Heart left ventricle (tissue), 16 donors: ENCODE measurements at regions of chr1 and their contacts with region 1.

Region 1: GRCh38 chr1:100613817-100614559 is 76.0 kb downstream of the GPR88 start:
- DNase-seq: no peak
- ATAC-seq: no peak
- H3K4me3 ChIP-seq: no peak overlapping the region
- H3K27ac ChIP-seq: no peak overlapping the region
- H3K4me1 ChIP-seq: no peaks in the 10 kb centered on the region
- H3K27me3 ChIP-seq: no peaks in the 10 kb centered on the region
- CTCF ChIP-seq: no peak
- POLR2A ChIP-seq: no peak

Region 2: GRCh38 chr1:100474834-100475233 is 139.2 kb before region 1 on chr1:
- intact Hi-C with region 1: loop called in 1 of 10 experiments (anchors 10 kb)
- DNase-seq: no peak
- ATAC-seq: no peak
- H3K4me3 ChIP-seq: no peak overlapping the region
- H3K27ac ChIP-seq: no peak overlapping the region
- H3K4me1 ChIP-seq: peaks cover 0 to 3% (median 0%) of the 10 kb centered on the region in 12 donors
- H3K27me3 ChIP-seq: no peaks in the 10 kb centered on the region
- CTCF ChIP-seq: no peak
- POLR2A ChIP-seq: no peak

Region 3: GRCh38 chr1:100556925-100557605 is 56.9 kb before region 1 on chr1:
- intact Hi-C with region 1: loop called in 1 of 10 experiments (anchors 10 kb)
- DNase-seq: no peak
- ATAC-seq: no peak
- H3K4me3 ChIP-seq: no peak overlapping the region
- H3K27ac ChIP-seq: no peak overlapping the region
- H3K4me1 ChIP-seq: no peaks in the 10 kb centered on the region
- H3K27me3 ChIP-seq: no peaks in the 10 kb centered on the region
- CTCF ChIP-seq: no peak
- POLR2A ChIP-seq: no peak